ENCODE measurements at regions of chr3 and their contacts with region 1.

Region 1: DNA sequence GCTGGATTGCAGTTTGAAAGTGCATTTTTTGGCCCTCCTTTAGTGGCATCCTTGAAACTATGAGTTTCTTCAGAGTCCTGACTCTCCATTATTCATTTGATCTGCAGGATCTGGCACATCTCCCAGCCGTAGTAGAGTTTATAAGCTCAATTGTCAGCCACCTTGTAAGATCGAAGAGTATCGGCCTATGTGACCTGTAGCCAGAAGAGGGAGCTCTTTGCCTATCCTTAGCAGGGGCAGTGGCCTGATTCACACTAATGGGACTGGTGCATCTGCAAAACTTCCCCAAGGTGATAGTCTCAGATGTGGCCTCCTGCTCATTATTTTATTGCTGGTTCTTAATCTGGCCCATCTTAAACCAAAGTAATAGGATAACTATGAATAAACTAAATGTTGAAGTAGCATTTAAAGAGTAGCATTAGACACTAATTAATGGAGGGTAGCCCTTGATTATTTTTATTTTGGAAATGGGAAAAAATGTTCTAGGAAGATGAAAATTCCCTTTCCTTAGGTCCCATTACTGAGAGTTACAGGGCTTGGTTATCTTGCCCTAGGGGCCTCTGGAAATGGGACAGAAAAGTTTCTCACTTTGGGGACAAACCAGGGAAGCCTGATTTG is 21.2 kb downstream of the GCSAM start:
- DNase-seq: peak; percentile 89
- ATAC-seq: peak; percentile 95
- H3K4me3 ChIP-seq: no peak overlapping the region
- H3K27ac ChIP-seq: no peak overlapping the region
- H3K4me1 ChIP-seq: peaks cover 13% of the 10 kb centered on the region
- H3K27me3 ChIP-seq: no peaks in the 10 kb centered on the region
- CTCF ChIP-seq: peak; percentile 94

Region 2: DNA sequence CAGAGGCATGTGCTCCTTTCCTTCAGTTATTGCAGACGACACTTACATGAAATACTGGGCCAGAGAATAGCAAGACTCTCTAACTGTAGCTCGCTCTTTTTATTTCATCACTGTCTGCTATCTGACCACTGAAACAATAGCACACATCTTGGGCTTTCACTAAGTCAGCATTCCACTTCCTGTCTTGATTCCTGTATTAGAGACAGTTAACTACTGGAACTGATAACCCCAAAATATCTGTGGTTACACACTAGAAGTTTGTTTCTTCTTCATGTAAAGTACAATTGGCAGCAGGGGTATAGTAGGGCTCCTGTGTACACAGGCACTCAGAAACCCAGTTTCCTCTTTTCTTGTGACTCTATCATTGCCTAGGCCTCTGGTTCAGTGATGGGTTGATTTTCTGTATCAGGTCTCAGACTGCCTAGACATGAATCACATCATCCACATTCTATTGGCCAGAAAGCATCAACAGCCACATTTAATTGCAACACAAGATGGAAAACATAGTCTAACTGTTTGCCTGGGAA is 800.1 kb before region 1 on chr3:
- CTCF ChIA-PET with region 1: interaction called, 23 read pairs
- POLR2A ChIA-PET with region 1: no interaction called
- intact Hi-C with region 1: no loop called
- DNase-seq: no peak
- ATAC-seq: no peak
- H3K4me3 ChIP-seq: no peak overlapping the region
- H3K27ac ChIP-seq: no peak overlapping the region
- H3K4me1 ChIP-seq: 0 out of 2 replicates have a peak, but pooled peaks cover 12% of the 10 kb centered on the region
- H3K27me3 ChIP-seq: no peaks in the 10 kb centered on the region
- CTCF ChIP-seq: no peak

Region 3: DNA sequence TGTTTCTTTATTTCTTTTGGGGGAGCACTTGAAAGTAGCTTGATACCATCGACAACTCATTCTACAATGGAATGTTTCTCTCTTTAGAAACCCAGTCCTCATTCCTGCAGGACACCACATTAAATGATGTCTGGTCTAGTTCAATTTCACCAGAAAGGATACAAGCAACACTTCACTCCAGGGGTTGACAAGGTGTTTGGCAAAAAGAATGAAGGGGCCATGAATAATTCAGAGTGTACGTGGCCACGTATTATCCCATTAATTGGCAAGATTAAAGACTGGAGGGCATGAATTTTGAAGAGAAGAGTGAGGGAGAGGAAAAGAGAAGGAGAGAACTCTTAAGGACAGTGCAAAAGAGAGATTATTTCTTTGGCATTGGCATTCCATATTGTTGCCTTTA is 76.7 kb before region 1 on chr3:
- CTCF ChIA-PET with region 1: no interaction called
- POLR2A ChIA-PET with region 1: no interaction called
- intact Hi-C with region 1: no loop called
- DNase-seq: no peak
- ATAC-seq: no peak
- H3K4me3 ChIP-seq: no peak overlapping the region
- H3K27ac ChIP-seq: no peak overlapping the region
- H3K4me1 ChIP-seq: no peaks in the 10 kb centered on the region
- H3K27me3 ChIP-seq: no peaks in the 10 kb centered on the region
- CTCF ChIP-seq: no peak